ENCODE measurements at regions of chr7 and their contacts with region 1.

Region 1: GRCh38 chr7:992709-993607 is 10.0 kb downstream of the CYP2W1 start:
- DNase-seq: peak; percentile 98
- H3K4me3 ChIP-seq: no peak overlapping the region
- H3K27ac ChIP-seq: no peak overlapping the region
- H3K4me1 ChIP-seq: peaks cover 7 to 30% (median 13%) of the 10 kb centered on the region in 4 donors
- H3K27me3 ChIP-seq: peaks cover 12% of the 10 kb centered on the region
- CTCF ChIP-seq: peak; percentile 99 to 100 (median 100)
- EP300 ChIP-seq: no peak
- POLR2A ChIP-seq: no peak

Region 2: GRCh38 chr7:1033546-1034145 is 40.7 kb after region 1 on chr7:
- in situ Hi-C with region 1: no loop called
- intact Hi-C with region 1: no loop called
- DNase-seq: no peak
- H3K4me3 ChIP-seq: no peak overlapping the region
- H3K27ac ChIP-seq: no peak overlapping the region
- H3K4me1 ChIP-seq: peaks cover 8 to 13% (median 9%) of the 10 kb centered on the region in 4 donors
- H3K27me3 ChIP-seq: no peaks in the 10 kb centered on the region
- CTCF ChIP-seq: no peak
- EP300 ChIP-seq: no peak
- POLR2A ChIP-seq: no peak

Region 3: GRCh38 chr7:1059200-1060091 is 66.5 kb after region 1 on chr7:
- in situ Hi-C with region 1: loop called in 3 of 4 experiments (anchors 5 to 10 kb)
- intact Hi-C with region 1: no loop called
- DNase-seq: peak; percentile 56
- H3K4me3 ChIP-seq: no peak overlapping the region
- H3K27ac ChIP-seq: peak overlapping the region; percentile 17 to 47 (median 39)
- H3K4me1 ChIP-seq: peaks cover 7 to 26% (median 17%) of the 10 kb centered on the region in 4 donors
- H3K27me3 ChIP-seq: no peaks in the 10 kb centered on the region
- CTCF ChIP-seq: no peak
- EP300 ChIP-seq: no peak
- POLR2A ChIP-seq: no peak

Region 4: DNA sequence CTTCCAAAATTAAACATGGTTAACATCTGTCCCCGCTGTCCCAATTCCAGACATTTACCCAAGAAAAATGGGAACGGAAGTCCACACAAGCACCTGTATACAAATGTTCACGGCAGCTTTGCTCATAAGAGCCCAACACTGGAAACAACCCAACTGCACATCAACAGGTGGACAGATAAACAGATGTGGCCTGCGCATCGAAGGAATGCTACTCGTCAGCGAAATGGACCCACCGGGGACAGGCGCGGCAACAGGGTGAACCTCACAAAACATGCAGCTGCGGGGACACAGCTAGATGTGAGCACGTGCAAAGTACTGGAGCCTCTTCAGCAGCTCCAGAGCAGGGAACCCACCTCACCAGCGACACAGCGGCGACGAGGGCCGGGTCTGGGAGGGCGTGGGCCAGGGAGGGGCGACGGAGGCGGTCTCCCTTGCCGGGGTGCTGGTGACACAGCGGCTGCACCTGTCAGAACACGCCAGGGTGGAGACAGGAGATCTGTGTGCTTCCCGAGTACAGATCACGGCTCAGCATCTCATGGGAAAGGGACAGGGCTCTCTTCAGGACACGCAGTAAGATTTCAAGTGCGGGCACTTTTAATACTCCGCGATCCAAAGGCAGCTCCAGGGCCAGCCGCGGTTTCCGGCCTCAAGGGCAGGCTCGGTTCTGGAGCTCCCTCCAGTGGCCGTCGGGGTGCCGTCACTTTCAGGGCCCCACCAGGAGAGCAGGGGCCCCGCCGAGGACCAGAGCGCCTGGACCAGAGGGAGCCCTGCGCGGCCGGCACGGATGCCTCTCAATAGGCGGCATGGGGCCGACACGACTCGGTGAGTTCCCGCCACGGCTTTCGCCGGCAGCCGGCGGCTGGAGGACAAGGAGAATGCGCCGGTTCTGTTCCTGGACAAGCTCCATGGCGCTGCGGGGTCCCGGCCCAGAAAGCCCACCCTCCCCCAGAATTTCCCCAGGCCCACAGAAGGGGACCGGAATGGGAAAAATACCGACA is 72.6 kb after region 1 on chr7:
- in situ Hi-C with region 1: loop called in 3 of 4 experiments (anchors 5 to 10 kb)
- intact Hi-C with region 1: loop called (anchors 1 kb)
- DNase-seq: peak; percentile 88
- H3K4me3 ChIP-seq: peak overlapping the region in 2 of 4 donors; percentile 6 to 21
- H3K27ac ChIP-seq: no peak overlapping the region
- H3K4me1 ChIP-seq: peaks cover 9 to 12% (median 9%) of the 10 kb centered on the region in 4 donors
- H3K27me3 ChIP-seq: no peaks in the 10 kb centered on the region
- CTCF ChIP-seq: peak; percentile 89 to 97 (median 95)
- EP300 ChIP-seq: no peak
- POLR2A ChIP-seq: no peak

Region 5: DNA sequence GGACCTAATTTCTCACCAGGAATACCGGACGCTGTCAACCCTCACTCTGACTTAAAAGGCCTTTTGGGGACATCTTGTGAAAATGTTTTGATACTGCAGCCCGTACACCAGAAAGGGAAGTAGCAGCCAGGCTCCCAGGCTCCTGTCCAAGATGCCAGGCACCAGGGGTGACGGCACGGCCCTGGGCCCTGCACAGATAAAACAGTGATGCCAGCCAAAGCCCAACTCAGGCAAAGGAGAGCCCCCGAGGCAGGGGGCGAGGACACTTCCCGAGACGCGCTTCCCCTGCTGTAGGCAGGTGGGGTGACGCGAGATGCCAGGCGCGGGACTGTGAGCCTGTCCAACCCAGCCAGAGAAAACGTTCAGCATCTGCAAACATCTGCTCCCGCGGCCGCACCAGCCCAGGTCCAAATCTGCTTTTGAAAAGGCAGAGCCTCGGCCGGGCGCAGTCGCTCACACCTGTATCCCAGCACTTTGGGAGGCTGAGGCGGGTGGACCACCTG is 151.4 kb after region 1 on chr7:
- in situ Hi-C with region 1: loop called in 1 of 4 experiments (anchors 25 kb)
- intact Hi-C with region 1: no loop called
- DNase-seq: no peak
- H3K4me3 ChIP-seq: no peak overlapping the region
- H3K27ac ChIP-seq: no peak overlapping the region
- H3K4me1 ChIP-seq: no peaks in the 10 kb centered on the region
- H3K27me3 ChIP-seq: no peaks in the 10 kb centered on the region
- CTCF ChIP-seq: peak in 3 of 5 experiments; percentile 16 to 18 (median 18)
- EP300 ChIP-seq: no peak
- POLR2A ChIP-seq: no peak

Region 6: DNA sequence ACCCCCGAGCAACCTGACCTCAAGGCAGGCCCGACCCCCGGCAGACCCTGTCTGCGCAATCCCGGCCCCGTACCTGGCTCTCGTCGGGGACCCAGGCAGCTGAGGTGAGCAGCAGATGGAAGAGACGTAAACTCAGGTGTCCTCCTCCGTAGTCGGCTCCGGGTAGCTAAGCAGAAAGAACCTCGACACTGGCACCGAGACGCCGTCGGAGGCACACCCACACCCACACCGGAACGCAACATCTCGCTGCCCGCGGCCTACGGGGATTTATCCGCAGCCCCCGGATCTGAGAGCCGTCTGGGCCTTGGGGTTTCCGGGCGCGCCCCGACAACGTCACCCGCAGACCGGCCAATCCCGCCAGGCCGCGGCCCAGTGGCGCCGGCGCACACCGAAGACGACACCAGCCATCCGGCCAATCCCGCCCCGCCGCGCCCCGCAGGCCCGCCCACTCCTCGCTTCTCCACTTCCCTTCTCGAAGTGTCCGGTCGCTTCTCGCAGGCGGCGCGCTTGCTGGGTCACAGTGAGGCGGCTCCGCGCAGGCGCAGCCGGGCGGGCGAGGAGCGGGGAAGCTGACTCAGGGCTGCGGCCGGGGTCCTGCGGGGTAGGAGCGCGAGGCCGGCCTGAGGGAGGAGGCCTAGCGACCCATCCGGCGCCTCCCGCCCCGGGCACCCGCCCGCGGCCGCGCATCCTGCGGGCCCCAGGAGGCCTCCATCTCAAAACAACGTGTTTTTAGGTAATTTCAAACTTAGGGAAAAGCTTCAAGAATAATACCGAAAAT is 167.1 kb after region 1 on chr7 and contains the start of gene ZFAND2A:
- in situ Hi-C with region 1: loop called in 3 of 4 experiments (anchors 10 to 25 kb)
- intact Hi-C with region 1: loop called (anchors 10 kb)
- DNase-seq: peak; percentile 99
- H3K4me3 ChIP-seq: peak within 1 kb of the TSS; percentile 57 to 97 (median 78)
- H3K27ac ChIP-seq: peak within 1 kb of the TSS; percentile 92 to 96 (median 94)
- H3K4me1 ChIP-seq: peaks cover 8 to 40% (median 32%) of the 10 kb centered on the region in 4 donors
- H3K27me3 ChIP-seq: no peaks in the 10 kb centered on the region
- CTCF ChIP-seq: no peak
- EP300 ChIP-seq: no peak
- POLR2A ChIP-seq: peak; percentile 96
- total RNA-seq, gene ZFAND2A: 33.3 to 124 (median 53.1) TPM